ENCODE measurements at regions of chr3 and their contacts with region 1.

Region 1: DNA sequence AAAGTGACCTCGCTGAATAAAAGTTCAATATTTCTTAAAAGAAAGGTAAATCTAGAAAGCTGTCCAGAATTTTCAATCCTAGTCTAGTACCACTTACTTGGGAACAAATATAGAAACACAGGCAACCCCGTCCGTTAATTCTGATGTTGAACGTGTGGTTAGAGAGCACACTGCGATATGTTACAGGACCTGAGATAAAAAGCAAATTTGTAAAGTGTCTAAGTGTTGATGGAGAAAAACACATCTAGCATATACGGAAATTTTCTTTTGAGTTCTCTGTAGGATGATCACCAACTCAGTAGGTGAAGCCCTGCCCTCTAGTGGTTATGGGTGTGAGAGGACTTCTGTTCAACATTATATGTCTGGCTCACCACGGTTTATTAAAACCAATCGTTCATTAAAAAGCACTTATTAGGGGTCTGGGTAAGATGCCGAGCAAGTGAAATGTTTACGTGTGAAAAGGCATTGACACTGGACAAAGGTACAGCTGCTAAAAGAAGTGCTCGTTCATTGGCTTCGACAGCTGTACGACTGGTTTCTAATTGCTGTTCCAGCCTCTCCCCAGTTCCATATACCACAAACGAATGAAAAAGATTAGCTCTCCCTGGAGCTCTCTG is 1.0 kb upstream of the ATP2C1 start:
- DNase-seq: peak; percentile 29
- ATAC-seq: peak; percentile 41
- H3K4me3 Mint-ChIP-seq: peak overlapping the region; percentile 94
- H3K27ac Mint-ChIP-seq: peak overlapping the region; percentile 98
- H3K4me1 Mint-ChIP-seq: peaks cover 30% of the 10 kb centered on the region
- H3K27me3 Mint-ChIP-seq: no peaks in the 10 kb centered on the region

Region 2: DNA sequence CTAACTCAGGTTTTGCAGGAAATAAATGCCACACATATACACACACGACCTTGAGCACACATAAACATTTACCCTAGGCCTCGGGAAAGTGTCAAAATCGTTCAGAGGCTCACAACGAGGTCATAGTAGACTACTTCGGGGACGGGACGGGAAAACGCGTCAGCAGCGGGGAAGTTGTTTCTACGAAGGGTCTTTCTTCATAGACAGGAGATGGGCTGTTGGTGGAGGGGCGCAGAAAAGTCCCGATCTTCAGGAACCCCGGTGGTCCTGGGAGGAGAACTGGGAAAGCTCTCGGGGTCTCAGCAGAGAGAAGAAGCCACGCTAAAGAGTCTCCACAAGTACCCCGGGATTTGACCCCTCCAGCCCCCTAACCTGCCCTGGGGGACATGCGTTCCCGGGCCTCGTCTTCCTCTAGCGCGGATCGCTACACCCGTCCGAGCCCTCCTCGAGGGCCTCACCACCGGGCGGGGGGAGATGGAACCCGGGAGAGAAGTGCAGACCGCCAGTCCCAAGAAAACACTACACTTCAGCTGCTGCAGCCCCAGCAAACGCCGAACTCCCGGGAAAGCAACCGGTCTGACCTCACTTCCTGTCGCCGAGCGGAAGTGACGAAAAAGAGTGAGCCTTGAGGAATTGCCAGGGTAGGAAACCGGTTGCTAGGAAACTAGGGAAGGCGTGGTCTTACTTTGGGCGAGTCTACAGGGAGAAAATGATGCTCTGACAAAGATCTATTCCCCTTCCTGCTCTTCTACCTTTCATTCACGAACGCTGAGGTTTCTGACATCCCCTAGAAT is 146.4 kb before region 1 on chr3 and contains the start of gene PIK3R4:
- POLR2A ChIA-PET with region 1: interaction called, 36 read pairs
- DNase-seq: peak; percentile 86
- ATAC-seq: peak; percentile 76
- H3K4me3 Mint-ChIP-seq: peak within 1 kb of the TSS; percentile 92
- H3K27ac Mint-ChIP-seq: peak within 1 kb of the TSS; percentile 95
- H3K4me1 Mint-ChIP-seq: peaks cover 32% of the 10 kb centered on the region
- H3K27me3 Mint-ChIP-seq: no peaks in the 10 kb centered on the region
- total RNA-seq, gene PIK3R4: 26.2 to 31.6 TPM

Region 3: DNA sequence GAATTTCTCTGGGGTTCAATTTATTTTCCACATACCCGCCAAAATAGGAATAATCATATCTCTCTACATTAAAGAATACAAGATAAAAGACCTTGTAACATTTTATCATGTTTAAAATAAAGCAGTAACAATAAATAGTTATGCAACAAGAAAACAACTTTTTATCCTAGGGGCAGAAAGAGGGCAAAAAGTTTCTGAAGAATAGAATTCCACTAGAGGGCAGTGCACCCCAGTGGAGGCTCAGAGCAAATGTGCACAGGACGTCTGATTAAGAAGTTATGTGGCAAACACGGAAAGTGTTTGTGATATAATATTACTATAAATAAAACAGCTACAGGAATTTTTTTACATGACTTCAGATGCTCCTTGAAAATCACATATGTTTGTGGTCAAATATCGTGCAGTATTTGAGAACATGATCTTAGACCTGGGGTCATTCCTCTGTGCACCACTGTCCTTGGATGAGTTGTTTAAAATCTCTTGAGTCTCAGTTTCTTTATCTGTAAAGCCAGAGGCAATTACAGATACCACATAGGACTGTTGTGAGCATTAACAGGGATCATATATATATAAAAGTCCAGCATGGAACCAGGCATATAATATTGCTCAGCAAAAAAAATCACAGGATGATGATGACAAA is 133.0 kb before region 1 on chr3:
- POLR2A ChIA-PET with region 1: interaction called, 13 read pairs
- DNase-seq: no peak
- ATAC-seq: peak; percentile 70
- H3K4me3 Mint-ChIP-seq: no peak overlapping the region
- H3K27ac Mint-ChIP-seq: no peak overlapping the region
- H3K4me1 Mint-ChIP-seq: peaks cover 13% of the 10 kb centered on the region
- H3K27me3 Mint-ChIP-seq: no peaks in the 10 kb centered on the region

Region 4: GRCh38 chr3:130834476-130834875 is 58.4 kb before region 1 on chr3:
- POLR2A ChIA-PET with region 1: no interaction called
- DNase-seq: no peak
- ATAC-seq: no peak
- H3K4me3 Mint-ChIP-seq: no peak overlapping the region
- H3K27ac Mint-ChIP-seq: no peak overlapping the region
- H3K4me1 Mint-ChIP-seq: no peaks in the 10 kb centered on the region
- H3K27me3 Mint-ChIP-seq: peaks cover 18% of the 10 kb centered on the region

Region 5: GRCh38 chr3:131026321-131027178 is 133.7 kb after region 1 on chr3 and contains the starts of genes ASTE1 and NEK11:
- POLR2A ChIA-PET with region 1: interaction called, 18 read pairs
- DNase-seq: peak; percentile 90
- ATAC-seq: peak; percentile 98
- H3K4me3 Mint-ChIP-seq: peak within 1 kb of the TSS; percentile 86
- H3K27ac Mint-ChIP-seq: peak within 1 kb of the TSS; percentile 93
- H3K4me1 Mint-ChIP-seq: peaks cover 33% of the 10 kb centered on the region
- H3K27me3 Mint-ChIP-seq: no peaks in the 10 kb centered on the region
- total RNA-seq, gene ASTE1: 16.8 to 22.0 TPM
- total RNA-seq, gene NEK11: 3.1 to 3.8 TPM